AG04449 (cell line): ENCODE measurements at regions of chr5 and their contacts with region 1.

Region 1: GRCh38 chr5:179818746-179819295 is 1.9 kb upstream of the SQSTM1 start:
- DNase-seq: peak; percentile 65
- H3K4me3 ChIP-seq: peak overlapping the region; percentile 40
- CTCF ChIP-seq: no peak

Region 2: GRCh38 chr5:179806250-179807222 is 12.3 kb before region 1 on chr5 and contains the start of gene MGAT4B:
- CTCF ChIA-PET with region 1: interaction called, 6 read pairs
- POLR2A ChIA-PET with region 1: interaction called, 15 read pairs
- DNase-seq: no peak
- H3K4me3 ChIP-seq: peak within 1 kb of the TSS; percentile 72
- CTCF ChIP-seq: no peak

Region 3: DNA sequence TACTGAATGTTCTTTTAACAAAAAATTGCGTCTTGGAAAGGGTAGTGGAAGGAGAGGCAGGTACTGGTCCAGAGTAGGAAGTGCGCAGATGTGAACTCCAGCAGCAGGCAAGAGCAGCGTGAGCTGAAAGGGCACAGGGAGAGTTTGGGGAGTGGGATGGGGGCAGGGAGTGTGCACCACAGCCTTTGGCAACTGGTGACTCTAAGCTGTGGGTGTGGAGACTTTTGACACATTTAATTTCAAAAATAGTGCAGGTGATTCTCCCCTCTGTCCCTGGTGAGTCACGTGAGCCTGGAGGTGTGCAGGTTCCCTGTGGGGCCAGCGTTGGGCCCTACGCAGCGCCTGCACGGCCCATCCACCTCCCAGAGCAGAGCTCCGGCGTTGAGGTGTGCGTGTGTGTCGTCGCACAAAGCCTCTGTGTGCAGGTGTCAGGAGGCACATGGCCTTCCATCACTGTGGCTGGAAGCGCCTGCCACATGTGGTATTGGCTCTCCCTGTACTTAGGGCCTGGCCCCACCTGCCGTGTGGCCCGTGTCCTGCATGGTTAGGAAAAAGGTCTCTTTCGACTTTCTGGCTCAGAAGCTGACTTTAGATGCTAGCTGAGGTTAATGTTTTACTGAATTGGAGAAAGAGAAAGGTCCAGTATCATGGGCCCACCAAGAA is 13.4 kb after region 1 on chr5:
- CTCF ChIA-PET with region 1: interaction called, 5 read pairs
- POLR2A ChIA-PET with region 1: interaction called, 15 read pairs
- DNase-seq: no peak
- H3K4me3 ChIP-seq: no peak overlapping the region
- CTCF ChIP-seq: no peak